ENCODE measurements at regions of chr1 and their contacts with region 1.

Region 1: GRCh38 chr1:40040511-40041465 is at the start of gene CAP1:
- DNase-seq: peak; percentile 100
- H3K4me3 Mint-ChIP-seq: peak within 1 kb of the TSS; percentile 87
- H3K27ac Mint-ChIP-seq: peak within 1 kb of the TSS; percentile 98
- H3K4me1 Mint-ChIP-seq: peaks cover 61% of the 10 kb centered on the region
- H3K27me3 Mint-ChIP-seq: no peaks in the 10 kb centered on the region
- total RNA-seq, gene CAP1: 522 to 525 TPM

Region 2: GRCh38 chr1:38953433-38953860 is 1087.3 kb before region 1 on chr1:
- CTCF ChIA-PET with region 1: no interaction called
- intact Hi-C with region 1: no loop called
- DNase-seq: peak; percentile 5
- H3K4me3 Mint-ChIP-seq: no peak overlapping the region
- H3K27ac Mint-ChIP-seq: no peak overlapping the region
- H3K4me1 Mint-ChIP-seq: peaks cover 8% of the 10 kb centered on the region
- H3K27me3 Mint-ChIP-seq: no peaks in the 10 kb centered on the region

Region 3: GRCh38 chr1:39886757-39887231 is 154.0 kb before region 1 on chr1:
- CTCF ChIA-PET with region 1: interaction called, 3 read pairs
- intact Hi-C with region 1: loop called (anchors 1 kb)
- DNase-seq: no peak
- H3K4me3 Mint-ChIP-seq: no peak overlapping the region
- H3K27ac Mint-ChIP-seq: no peak overlapping the region
- H3K4me1 Mint-ChIP-seq: peaks cover 9% of the 10 kb centered on the region
- H3K27me3 Mint-ChIP-seq: peaks cover 2% of the 10 kb centered on the region

Region 4: GRCh38 chr1:40059338-40059959 is 18.7 kb after region 1 on chr1:
- CTCF ChIA-PET with region 1: interaction called, 11 read pairs
- intact Hi-C with region 1: loop called (anchors 2 kb)
- DNase-seq: no peak
- H3K4me3 Mint-ChIP-seq: peak overlapping the region; percentile 41
- H3K27ac Mint-ChIP-seq: peak overlapping the region; percentile 83
- H3K4me1 Mint-ChIP-seq: peaks cover 88% of the 10 kb centered on the region
- H3K27me3 Mint-ChIP-seq: no peaks in the 10 kb centered on the region

Region 5: GRCh38 chr1:40078512-40079333 is 37.9 kb after region 1 on chr1:
- CTCF ChIA-PET with region 1: interaction called, 6 read pairs
- intact Hi-C with region 1: loop called (anchors 5 kb)
- DNase-seq: peak; percentile 75
- H3K4me3 Mint-ChIP-seq: no peak overlapping the region
- H3K27ac Mint-ChIP-seq: no peak overlapping the region
- H3K4me1 Mint-ChIP-seq: peaks cover 7% of the 10 kb centered on the region
- H3K27me3 Mint-ChIP-seq: no peaks in the 10 kb centered on the region

Region 6: DNA sequence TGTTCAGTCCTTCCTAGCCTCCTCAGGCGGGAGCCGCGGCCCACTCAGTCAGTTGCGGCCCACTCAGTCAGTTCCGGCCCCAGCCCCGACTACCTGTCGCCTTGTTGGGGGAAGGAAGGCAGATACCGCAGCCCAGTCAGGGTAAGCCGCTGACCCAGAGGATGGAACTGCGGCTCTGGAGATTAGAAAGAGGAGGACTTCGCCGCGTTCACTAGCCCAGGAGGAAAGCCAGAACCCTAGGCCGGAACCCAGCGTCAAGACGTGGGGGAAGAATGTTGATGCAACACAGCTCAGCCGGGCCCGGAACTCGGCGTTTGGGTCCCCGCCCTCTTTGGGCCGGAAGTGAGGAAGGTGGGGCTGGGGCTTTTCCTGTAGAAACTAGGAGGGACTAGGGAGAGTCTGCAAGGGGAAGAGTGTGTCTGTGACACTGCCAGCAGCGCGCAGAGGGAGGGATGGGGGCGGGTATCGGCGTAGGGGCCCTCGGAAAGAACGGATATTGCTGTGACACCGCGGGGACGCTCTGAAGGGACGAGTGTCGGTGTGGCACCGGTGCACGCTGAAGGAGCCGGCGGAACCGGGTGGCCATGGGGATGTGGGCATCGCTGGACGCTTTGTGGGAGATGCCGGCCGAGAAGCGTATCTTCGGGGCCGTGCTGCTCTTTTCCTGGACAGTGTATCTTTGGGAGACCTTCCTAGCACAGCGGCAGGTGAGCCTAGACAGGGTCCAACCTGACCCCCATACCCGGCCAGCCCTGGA is 217.1 kb after region 1 on chr1 and contains the start of gene ZMPSTE24:
- CTCF ChIA-PET with region 1: no interaction called
- intact Hi-C with region 1: loop called (anchors 2 kb)
- DNase-seq: peak; percentile 98
- H3K4me3 Mint-ChIP-seq: peak within 1 kb of the TSS; percentile 99
- H3K27ac Mint-ChIP-seq: peak within 1 kb of the TSS; percentile 100
- H3K4me1 Mint-ChIP-seq: peaks cover 35% of the 10 kb centered on the region
- H3K27me3 Mint-ChIP-seq: no peaks in the 10 kb centered on the region
- total RNA-seq, gene ZMPSTE24: 13.2 to 14.7 TPM

Measured in activated naive CD4-positive, alpha-beta T cell treated with anti-CD3 and anti-CD28 coated beads for 36 hours (primary cell).